ENCODE measurements at regions of chr2 and their contacts with region 1.

Region 1: GRCh38 chr2:88159955-88160415 is 10.2 kb upstream of the THNSL2 start:
- DNase-seq: no peak

Region 2: DNA sequence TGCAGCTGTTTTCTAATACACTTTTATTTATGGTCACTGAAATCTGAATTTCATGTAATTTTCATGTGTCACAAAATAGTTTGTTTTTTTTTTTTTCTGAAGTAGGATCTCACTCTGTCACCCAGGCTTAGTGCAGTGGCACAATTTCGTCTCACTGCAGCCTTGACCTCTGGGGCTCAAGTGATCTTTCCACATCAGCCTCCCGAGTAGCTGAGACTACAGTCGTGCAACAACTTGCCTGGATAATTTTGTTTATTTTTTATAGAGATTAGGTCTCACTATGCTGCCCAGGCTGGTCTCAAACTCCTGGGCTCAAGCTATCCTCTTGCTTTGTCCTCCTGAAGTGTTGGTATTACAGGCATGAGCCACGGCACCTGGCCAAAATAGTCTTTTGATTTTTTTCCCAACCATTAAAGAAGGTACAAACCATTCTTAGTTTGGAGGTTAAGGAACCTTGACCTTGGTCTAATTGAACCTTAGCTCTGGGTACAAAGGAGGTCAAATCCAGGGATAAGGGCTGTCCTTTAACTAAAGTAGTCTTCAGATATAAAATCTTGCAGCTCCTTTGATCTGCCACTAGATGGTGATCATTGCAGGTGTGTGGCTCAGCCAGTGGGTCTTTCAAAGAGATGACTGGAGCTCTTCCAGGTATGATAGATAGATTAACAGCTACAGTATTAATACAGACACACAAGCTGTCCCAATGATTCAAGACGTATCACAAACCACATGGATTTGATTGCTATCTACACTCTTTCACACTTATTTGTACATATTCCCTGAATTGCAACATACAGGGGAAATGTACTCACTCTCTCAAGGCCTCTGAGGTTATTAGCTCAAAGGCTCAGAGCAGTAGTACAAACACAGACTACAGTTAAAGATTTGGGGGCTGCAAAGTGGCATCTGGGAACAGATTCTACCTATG is 99.7 kb before region 1 on chr2:
- intact Hi-C with region 1: loop called (anchors 2 kb)
- DNase-seq: no peak

Region 3: DNA sequence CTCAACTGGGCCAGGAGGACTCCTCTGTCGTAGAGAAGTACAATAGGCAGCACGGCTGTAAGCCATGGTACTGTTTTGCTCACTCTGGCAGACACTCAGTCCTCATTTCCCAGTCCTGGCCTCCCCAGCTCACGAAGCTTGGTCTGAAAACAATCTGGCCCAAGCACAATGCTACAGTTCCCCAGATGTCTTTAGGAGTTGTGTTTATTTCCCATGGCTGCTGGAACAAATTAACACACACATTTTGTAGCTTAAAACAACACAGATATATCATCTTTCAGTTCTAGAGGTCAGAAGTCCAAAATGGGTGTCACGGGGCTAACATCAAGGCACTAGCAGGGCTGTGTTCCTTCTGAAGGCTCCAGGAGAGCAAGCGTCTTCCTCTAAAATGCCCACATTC is 45.1 kb before region 1 on chr2:
- intact Hi-C with region 1: no loop called
- DNase-seq: no peak

Region 4: GRCh38 chr2:88170472-88170892 is 10.5 kb after region 1 on chr2:
- intact Hi-C with region 1: no loop called
- DNase-seq: no peak

Measured in cardiac septum (tissue), 1 donor.